PC-3 (cell line): ENCODE measurements at regions of chr1 and their contacts with region 1.

Region 1: GRCh38 chr1:41862384-41863174 is 56.1 kb downstream of the HIVEP3 start:
- DNase-seq: peak; percentile 96
- ATAC-seq: peak; percentile 76
- H3K4me3 ChIP-seq: peak overlapping the region; percentile 60
- H3K27ac ChIP-seq: peak overlapping the region; percentile 98
- H3K4me1 ChIP-seq: peaks cover 73% of the 10 kb centered on the region
- H3K27me3 ChIP-seq: no peaks in the 10 kb centered on the region
- CTCF ChIP-seq: no peak

Region 2: GRCh38 chr1:41812051-41812450 is 50.5 kb before region 1 on chr1:
- CTCF ChIA-PET with region 1: no interaction called
- POLR2A ChIA-PET with region 1: no interaction called
- intact Hi-C with region 1: loop called (anchors 1 kb)
- DNase-seq: peak; percentile 85
- ATAC-seq: peak; percentile 90
- H3K4me3 ChIP-seq: no peak overlapping the region
- H3K27ac ChIP-seq: peak overlapping the region; percentile 47
- H3K4me1 ChIP-seq: peaks cover 18% of the 10 kb centered on the region
- H3K27me3 ChIP-seq: no peaks in the 10 kb centered on the region
- CTCF ChIP-seq: peak; percentile 85

Region 3: GRCh38 chr1:41842993-41843755 is 19.4 kb before region 1 on chr1:
- CTCF ChIA-PET with region 1: no interaction called
- POLR2A ChIA-PET with region 1: interaction called, 6 read pairs
- intact Hi-C with region 1: loop called (anchors 1 kb)
- DNase-seq: peak; percentile 68
- ATAC-seq: peak; percentile 19
- H3K4me3 ChIP-seq: no peak overlapping the region
- H3K27ac ChIP-seq: peak overlapping the region; percentile 67
- H3K4me1 ChIP-seq: peaks cover 71% of the 10 kb centered on the region
- H3K27me3 ChIP-seq: no peaks in the 10 kb centered on the region
- CTCF ChIP-seq: 0 out of 2 replicates have a peak, but pooled peaks have one; percentile 21

Region 4: GRCh38 chr1:41851589-41851988 is 11.0 kb before region 1 on chr1:
- CTCF ChIA-PET with region 1: no interaction called
- POLR2A ChIA-PET with region 1: interaction called, 4 read pairs
- intact Hi-C with region 1: loop called (anchors 1 kb)
- DNase-seq: peak; percentile 96
- ATAC-seq: peak; percentile 93
- H3K4me3 ChIP-seq: 0 out of 2 replicates have a peak overlapping the region, but pooled peaks have one; percentile 2
- H3K27ac ChIP-seq: peak overlapping the region; percentile 85
- H3K4me1 ChIP-seq: peaks cover 65% of the 10 kb centered on the region
- H3K27me3 ChIP-seq: no peaks in the 10 kb centered on the region
- CTCF ChIP-seq: no peak

Region 5: GRCh38 chr1:41876576-41877445 is 14.2 kb after region 1 on chr1:
- CTCF ChIA-PET with region 1: no interaction called
- POLR2A ChIA-PET with region 1: no interaction called
- intact Hi-C with region 1: no loop called
- DNase-seq: no peak
- ATAC-seq: no peak
- H3K4me3 ChIP-seq: no peak overlapping the region
- H3K27ac ChIP-seq: no peak overlapping the region
- H3K4me1 ChIP-seq: peaks cover 31% of the 10 kb centered on the region
- H3K27me3 ChIP-seq: no peaks in the 10 kb centered on the region
- CTCF ChIP-seq: no peak

Region 6: GRCh38 chr1:41902125-41902524 is 39.5 kb after region 1 on chr1:
- CTCF ChIA-PET with region 1: no interaction called
- POLR2A ChIA-PET with region 1: no interaction called
- intact Hi-C with region 1: loop called (anchors 5 kb)
- DNase-seq: peak; percentile 59
- ATAC-seq: peak; percentile 16
- H3K4me3 ChIP-seq: no peak overlapping the region
- H3K27ac ChIP-seq: peak overlapping the region; percentile 80
- H3K4me1 ChIP-seq: peaks cover 52% of the 10 kb centered on the region
- H3K27me3 ChIP-seq: no peaks in the 10 kb centered on the region
- CTCF ChIP-seq: no peak

Region 7: DNA sequence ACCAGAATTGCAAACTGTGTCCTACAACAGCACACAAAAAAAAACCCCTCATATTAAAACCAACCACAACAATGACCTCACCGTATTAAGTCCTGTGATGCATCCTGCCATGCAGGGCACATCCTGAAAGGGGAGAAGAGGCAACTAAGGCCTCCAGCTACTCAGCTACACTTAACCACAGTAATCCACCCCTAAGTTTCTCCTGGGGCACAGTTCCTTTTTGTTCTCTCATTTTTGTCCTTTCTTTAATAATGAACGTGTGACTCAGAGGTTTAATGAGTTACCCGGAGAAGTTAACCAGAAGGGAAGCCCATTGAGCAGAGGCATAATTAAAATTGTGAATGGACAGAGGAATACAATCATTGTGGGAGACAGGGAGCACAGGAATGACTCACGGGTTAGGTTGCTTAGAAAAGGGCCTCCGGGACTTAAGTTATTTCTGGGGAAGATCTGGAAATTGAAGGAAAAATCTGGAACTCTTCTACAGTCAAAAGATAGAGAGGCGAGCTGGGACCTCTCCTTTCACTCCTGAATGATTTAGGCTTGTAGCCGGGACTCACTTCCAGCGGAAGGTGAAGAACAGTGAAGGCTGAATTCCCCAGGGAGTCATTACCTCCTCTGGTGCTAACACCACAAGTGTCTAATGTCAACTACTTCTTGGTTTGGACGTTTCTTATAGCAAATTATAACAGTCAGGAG is 93.0 kb after region 1 on chr1:
- CTCF ChIA-PET with region 1: no interaction called
- POLR2A ChIA-PET with region 1: no interaction called
- intact Hi-C with region 1: loop called (anchors 2 kb)
- DNase-seq: peak; percentile 96
- ATAC-seq: peak; percentile 82
- H3K4me3 ChIP-seq: peak overlapping the region; percentile 51; the same call in 1 of the 2 replicates
- H3K27ac ChIP-seq: peak overlapping the region; percentile 99
- H3K4me1 ChIP-seq: peaks cover 62% of the 10 kb centered on the region
- H3K27me3 ChIP-seq: no peaks in the 10 kb centered on the region
- CTCF ChIP-seq: no peak